Activated naive CD4-positive, alpha-beta T cell treated with anti-CD3 and anti-CD28 coated beads for 36 hours (primary cell): ENCODE measurements at regions of chr16 and their contacts with region 1.

Region 1: DNA sequence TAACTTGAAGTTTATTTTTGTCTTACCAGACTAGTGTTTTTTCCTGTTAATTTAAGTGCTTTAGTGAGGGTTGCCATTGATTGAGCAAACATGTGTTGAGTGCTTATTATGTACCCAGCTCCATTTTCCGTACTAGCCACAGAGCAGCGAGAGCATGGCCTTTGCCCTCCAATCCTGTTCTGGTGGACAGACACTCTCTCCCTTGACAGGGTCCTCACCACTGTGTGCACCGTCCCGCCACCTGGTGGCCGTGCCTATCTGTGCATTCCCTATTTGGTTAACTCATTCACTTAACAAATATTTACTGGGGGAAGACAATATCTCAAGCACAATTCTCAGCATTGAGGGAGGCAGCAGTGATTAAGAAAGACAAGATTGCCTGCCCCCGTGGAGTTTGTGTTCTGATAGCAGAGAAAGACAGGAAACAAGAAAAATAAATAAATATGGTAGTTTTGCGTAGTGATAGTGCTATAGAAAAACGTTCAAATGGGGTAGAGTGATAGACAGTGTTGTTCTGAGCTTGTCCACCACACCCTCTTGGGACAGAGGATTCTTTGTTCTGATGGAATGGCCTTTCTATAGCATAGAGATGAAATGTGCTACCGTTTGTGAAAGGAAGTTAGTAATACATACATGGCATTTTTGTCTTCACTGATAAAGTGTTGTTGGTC is 13.0 kb downstream of the CDH13 start:
- DNase-seq: peak; percentile 66
- H3K4me3 Mint-ChIP-seq: no peak overlapping the region
- H3K27ac Mint-ChIP-seq: no peak overlapping the region
- H3K4me1 Mint-ChIP-seq: peaks cover 8% of the 10 kb centered on the region
- H3K27me3 Mint-ChIP-seq: peaks cover 6% of the 10 kb centered on the region

Region 2: DNA sequence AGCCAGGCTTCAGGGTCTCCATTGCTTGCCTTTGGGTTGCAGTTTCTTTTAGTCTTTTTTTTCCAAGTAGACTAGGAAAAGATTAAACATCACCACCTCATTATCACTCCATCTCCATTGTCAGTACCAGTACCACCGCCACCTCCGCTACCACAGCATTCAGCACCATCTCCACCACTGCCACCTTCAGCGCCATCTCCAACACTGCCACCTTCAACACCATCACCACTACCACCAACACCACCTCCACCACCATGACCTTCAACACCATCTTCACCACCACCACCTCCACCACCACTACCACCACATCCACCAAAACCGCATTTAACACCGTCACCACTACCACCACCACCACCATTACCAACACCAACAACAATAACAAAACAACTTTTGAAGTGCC is 328.3 kb before region 1 on chr16:
- CTCF ChIA-PET with region 1: no interaction called
- intact Hi-C with region 1: no loop called
- DNase-seq: no peak
- H3K4me3 Mint-ChIP-seq: no peak overlapping the region
- H3K27ac Mint-ChIP-seq: no peak overlapping the region
- H3K4me1 Mint-ChIP-seq: no peaks in the 10 kb centered on the region
- H3K27me3 Mint-ChIP-seq: peaks cover 12% of the 10 kb centered on the region

Region 3: DNA sequence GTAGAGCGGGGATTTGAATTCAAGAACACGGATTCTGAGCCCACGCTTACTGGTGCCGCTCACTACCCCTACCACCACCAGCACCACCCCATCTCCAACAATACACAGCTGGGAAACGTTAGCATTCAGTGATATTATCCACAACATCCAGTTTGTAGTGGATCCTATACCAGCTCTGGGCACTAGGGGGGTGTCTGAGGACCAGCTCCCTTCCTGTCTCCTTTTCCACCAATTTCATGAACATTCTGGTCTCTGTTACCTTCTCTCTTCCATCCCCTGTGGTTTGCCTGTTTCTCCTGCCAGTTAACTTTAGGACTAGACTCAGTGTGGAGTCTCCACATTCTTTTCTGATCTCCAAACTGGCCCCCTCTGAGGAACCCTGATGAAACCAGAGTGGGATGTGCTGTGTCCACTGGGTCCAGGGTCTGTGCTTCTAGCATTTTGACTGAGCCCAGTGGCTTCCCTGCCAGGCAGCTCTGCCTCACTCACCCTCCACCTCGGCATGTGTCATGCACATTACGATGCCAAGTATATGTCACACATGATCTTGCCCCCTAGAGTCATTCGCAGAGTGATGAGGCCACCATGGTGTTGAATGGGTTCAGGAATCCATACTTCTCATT is 200.0 kb before region 1 on chr16:
- CTCF ChIA-PET with region 1: no interaction called
- intact Hi-C with region 1: no loop called
- DNase-seq: no peak
- H3K4me3 Mint-ChIP-seq: no peak overlapping the region
- H3K27ac Mint-ChIP-seq: no peak overlapping the region
- H3K4me1 Mint-ChIP-seq: no peaks in the 10 kb centered on the region
- H3K27me3 Mint-ChIP-seq: peaks cover 17% of the 10 kb centered on the region

Region 4: DNA sequence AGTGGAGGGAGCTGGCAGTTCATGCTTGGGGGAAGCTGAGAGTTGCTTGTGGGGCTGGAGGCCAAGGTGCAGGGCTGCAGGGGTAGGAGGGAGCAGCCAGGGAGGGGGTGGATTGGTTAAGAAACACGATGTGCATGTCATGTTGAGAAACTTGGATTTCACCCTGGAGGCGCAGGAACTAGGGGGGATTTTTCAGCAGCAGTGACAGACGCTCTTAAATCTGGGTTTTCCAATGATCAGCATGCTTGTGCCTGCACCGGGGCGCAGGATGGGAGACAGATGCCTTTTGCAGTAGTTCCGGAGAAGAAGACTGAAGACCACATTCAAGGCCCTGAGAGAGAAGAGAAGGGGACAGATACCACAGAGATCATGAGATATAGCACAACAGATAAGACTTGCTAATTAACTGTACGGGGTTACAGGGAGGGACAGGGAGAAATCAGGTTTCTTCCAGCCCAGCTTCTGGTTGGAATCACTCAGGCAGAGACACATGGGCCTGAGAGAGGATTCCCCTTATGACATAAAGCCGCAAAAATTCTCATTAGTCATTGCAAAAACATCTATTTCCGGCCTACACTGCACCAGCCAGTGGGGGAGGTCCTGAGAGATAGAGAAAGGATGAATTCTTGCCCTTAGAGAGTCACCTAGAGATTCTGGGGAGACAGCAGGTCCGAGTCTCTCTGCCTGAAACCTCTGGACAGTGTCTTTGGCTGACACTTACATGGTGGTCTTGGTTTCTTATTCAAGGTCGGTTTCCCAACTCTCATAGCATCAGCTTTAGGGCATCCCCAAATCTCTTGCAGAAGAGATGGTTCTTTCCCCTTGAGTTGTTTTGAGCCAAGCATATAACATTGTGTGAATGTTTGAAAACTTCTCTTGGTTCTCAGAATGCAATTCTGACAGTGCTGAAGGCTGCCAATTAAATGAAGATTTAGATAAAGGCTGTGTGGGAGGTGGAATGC is 14.0 kb after region 1 on chr16:
- CTCF ChIA-PET with region 1: interaction called, 5 read pairs
- intact Hi-C with region 1: loop called (anchors 2 kb)
- DNase-seq: peak; percentile 67
- H3K4me3 Mint-ChIP-seq: peak overlapping the region; percentile 38
- H3K27ac Mint-ChIP-seq: peak overlapping the region; percentile 88
- H3K4me1 Mint-ChIP-seq: peaks cover 66% of the 10 kb centered on the region
- H3K27me3 Mint-ChIP-seq: no peaks in the 10 kb centered on the region

Region 5: GRCh38 chr16:82671741-82672140 is 31.9 kb after region 1 on chr16:
- CTCF ChIA-PET with region 1: interaction called, 4 read pairs
- intact Hi-C with region 1: loop called (anchors 1 kb)
- DNase-seq: peak; percentile 56
- H3K4me3 Mint-ChIP-seq: no peak overlapping the region
- H3K27ac Mint-ChIP-seq: no peak overlapping the region
- H3K4me1 Mint-ChIP-seq: no peaks in the 10 kb centered on the region
- H3K27me3 Mint-ChIP-seq: peaks cover 4% of the 10 kb centered on the region

Region 6: DNA sequence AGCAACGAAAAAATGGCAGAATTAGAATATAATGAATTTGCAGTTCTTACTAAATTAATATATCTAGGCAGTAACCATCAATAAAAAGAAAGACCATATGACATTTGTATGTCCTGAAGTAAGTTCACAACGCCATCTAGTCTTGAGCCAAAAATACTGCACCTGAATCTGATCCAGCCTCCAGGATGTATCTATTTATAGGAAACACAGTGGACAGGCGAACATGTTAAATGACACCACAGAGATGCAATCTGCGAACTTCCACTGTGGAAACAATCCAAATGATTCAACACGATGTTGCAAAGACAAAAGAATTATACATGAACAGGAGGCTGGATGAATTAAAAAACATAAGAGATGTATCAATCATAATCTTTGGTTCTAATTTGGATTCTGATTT is 184.6 kb after region 1 on chr16:
- CTCF ChIA-PET with region 1: no interaction called
- intact Hi-C with region 1: loop called (anchors 5 kb)
- DNase-seq: no peak
- H3K4me3 Mint-ChIP-seq: no peak overlapping the region
- H3K27ac Mint-ChIP-seq: no peak overlapping the region
- H3K4me1 Mint-ChIP-seq: no peaks in the 10 kb centered on the region
- H3K27me3 Mint-ChIP-seq: peaks cover 3% of the 10 kb centered on the region

Region 7: GRCh38 chr16:82954224-82954929 is 314.6 kb after region 1 on chr16:
- CTCF ChIA-PET with region 1: no interaction called
- intact Hi-C with region 1: no loop called
- DNase-seq: no peak
- H3K4me3 Mint-ChIP-seq: no peak overlapping the region
- H3K27ac Mint-ChIP-seq: no peak overlapping the region
- H3K4me1 Mint-ChIP-seq: no peaks in the 10 kb centered on the region
- H3K27me3 Mint-ChIP-seq: peaks cover 5% of the 10 kb centered on the region